ENCODE measurements at regions of chr11 and their contacts with region 1.

Region 1: DNA sequence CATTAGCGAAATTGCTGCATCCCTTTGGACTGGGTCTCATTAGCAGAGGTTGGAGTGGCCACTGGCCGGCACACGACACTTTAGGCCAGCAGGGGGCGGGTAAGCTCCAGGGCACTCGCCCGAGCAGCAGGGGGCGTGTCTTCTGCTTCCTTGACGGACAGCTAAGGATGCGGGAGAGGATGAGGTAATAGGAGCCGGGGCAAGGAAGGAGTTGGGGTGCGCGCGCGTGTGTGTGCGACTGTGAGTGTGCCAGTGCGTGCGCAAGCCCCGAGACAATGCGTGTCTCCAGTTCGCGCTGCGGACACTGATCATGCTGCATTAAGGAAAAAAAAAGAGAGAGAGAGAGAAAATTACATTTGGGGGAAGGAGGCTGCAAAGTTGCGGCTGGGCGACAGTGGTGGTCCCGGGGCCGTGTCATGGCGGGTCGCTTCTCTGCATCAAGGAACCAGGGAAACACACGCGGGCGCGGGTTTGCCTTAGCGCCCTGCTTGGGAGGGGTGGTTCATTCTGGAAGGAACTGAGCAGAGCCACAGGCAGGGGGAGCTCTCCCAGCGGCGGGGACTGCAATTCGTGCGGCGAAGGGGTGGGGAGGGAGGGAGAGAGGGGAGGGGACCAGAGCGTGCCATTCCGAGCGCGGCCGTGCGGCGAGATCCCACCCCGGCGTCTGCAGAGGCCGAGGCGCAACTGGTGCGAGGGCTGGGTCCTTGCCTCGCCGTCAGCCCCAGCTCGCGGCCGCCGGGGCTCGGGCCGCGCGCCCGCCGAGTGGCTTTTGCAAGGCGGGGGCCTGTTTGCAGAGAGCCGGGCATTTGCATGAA is at the start of gene DTX4:
- DNase-seq: peak; percentile 89
- CTCF ChIP-seq: peak; percentile 100

Region 2: DNA sequence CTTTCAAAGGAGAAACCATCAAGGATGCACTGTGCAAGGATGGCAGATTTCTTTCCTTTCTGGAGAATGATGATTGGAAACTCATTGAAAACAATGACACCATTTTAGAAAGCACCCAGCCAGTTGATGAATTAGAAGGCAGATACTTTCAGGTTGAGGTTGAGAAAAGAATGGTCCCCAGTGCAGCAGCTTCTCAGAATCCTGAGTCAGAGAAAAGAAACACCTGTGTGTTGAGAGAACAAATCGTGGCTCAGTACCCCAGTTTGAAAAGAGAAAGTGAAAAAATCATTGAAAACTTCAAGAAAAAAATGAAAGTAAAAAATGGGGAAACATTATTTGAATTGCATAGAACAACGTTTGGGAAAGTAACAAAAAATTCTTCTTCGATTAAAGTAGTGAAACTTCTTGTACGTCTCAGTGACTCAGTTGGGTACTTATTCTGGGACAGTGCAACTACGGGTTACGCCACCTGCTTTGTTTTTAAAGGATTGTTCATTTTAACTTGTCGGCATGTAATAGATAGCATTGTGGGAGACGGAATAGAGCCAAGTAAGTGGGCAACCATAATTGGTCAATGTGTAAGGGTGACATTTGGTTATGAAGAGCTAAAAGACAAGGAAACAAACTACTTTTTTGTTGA is 19.3 kb before region 1 on chr11:
- CTCF ChIA-PET with region 1: interaction called, 116 read pairs
- POLR2A ChIA-PET with region 1: no interaction called
- DNase-seq: peak; percentile 48
- CTCF ChIP-seq: no peak

Region 3: GRCh38 chr11:59207988-59208451 is 36.3 kb after region 1 on chr11:
- CTCF ChIA-PET with region 1: interaction called, 962 read pairs
- POLR2A ChIA-PET with region 1: no interaction called
- DNase-seq: peak; percentile 62
- CTCF ChIP-seq: peak; percentile 66

Region 4: GRCh38 chr11:59224351-59224928 is 52.7 kb after region 1 on chr11:
- CTCF ChIA-PET with region 1: interaction called, 18 read pairs
- POLR2A ChIA-PET with region 1: no interaction called
- DNase-seq: no peak
- CTCF ChIP-seq: no peak

Region 5: GRCh38 chr11:59273373-59273841 is 101.7 kb after region 1 on chr11:
- CTCF ChIA-PET with region 1: interaction called, 45 read pairs
- POLR2A ChIA-PET with region 1: no interaction called
- DNase-seq: peak; percentile 51
- CTCF ChIP-seq: no peak

Region 6: DNA sequence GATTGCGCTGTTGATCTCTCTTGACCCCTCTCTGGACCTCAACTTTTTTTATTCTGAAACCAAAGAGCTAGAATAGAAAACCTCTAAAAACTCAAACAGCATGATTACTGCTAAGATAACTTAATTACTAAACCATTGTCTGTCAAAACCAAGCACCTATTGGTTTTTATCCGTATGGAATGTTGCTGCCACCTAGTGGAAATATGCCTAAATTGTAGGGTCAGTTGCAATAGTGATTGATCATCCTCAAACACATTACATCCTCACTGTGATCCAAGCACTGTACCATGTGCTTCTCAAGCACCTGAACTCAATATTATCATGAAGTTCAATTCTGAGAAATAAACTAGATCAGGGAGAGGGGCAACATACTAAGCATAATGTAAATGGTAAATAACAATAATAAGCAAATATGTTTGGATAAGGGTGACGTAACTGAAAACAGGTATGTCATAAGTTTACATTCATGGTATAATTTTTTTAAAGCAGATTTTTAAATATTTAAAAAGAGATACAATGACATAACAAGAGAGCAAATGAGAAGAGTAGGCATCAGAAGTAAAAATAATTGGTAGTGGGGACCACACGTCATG is 258.3 kb after region 1 on chr11:
- CTCF ChIA-PET with region 1: interaction called, 77 read pairs
- POLR2A ChIA-PET with region 1: no interaction called
- DNase-seq: peak; percentile 62
- CTCF ChIP-seq: peak; percentile 68

Measured in GM10248 (cell line).